ENCODE measurements at regions of chr4 and their contacts with region 1.

Region 1: GRCh38 chr4:986879-987623 is at the start of gene IDUA:
- DNase-seq: peak; percentile 61
- ATAC-seq: peak; percentile 82
- H3K4me3 ChIP-seq: peak within 1 kb of the TSS; percentile 67 to 71
- H3K27ac ChIP-seq: peak within 1 kb of the TSS; percentile 88
- H3K4me1 ChIP-seq: peaks cover 10 to 39% of the 10 kb centered on the region in 2 experiments
- H3K27me3 ChIP-seq: no peaks in the 10 kb centered on the region
- CTCF ChIP-seq: peak in 2 of 3 experiments; percentile 49 to 67; a peak in 4 of 6 replicates
- POLR2A ChIP-seq: peak; percentile 54
- RAD21 ChIP-seq: no peak
- total RNA-seq, gene IDUA: 28.2 TPM

Region 2: DNA sequence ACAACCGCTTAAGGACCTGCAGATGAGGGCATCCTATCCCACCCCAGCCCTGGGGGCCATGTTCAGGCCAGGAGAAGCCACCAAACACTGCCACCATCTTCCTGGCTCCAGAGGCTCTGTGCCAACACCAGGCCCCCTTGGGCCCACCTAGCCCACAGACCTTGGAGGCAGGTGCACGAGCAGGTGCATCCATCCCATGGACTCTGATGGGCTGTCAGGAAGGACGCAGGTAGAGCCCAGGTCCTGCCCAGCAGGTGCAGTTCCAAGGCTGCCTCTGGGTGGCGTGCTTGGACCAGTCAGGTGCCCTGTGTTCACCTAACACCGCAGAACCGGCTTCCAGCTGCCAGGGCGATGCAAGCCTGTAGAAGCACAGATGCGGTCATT is 384.5 kb before region 1 on chr4:
- CTCF ChIA-PET with region 1: interaction called, 3 read pairs
- POLR2A ChIA-PET with region 1: no interaction called
- RAD21 ChIA-PET with region 1: no interaction called
- intact Hi-C with region 1: loop called (anchors 10 kb)
- DNase-seq: peak; percentile 60
- ATAC-seq: peak; percentile 99
- H3K4me3 ChIP-seq: no peak overlapping the region
- H3K27ac ChIP-seq: no peak overlapping the region
- H3K4me1 ChIP-seq: peaks cover 3 to 4% of the 10 kb centered on the region in 2 experiments; a peak in 2 of 4 replicates
- H3K27me3 ChIP-seq: no peaks in the 10 kb centered on the region
- CTCF ChIP-seq: peak; percentile 65 to 90 (median 89)
- POLR2A ChIP-seq: no peak
- RAD21 ChIP-seq: peak; percentile 96

Region 3: DNA sequence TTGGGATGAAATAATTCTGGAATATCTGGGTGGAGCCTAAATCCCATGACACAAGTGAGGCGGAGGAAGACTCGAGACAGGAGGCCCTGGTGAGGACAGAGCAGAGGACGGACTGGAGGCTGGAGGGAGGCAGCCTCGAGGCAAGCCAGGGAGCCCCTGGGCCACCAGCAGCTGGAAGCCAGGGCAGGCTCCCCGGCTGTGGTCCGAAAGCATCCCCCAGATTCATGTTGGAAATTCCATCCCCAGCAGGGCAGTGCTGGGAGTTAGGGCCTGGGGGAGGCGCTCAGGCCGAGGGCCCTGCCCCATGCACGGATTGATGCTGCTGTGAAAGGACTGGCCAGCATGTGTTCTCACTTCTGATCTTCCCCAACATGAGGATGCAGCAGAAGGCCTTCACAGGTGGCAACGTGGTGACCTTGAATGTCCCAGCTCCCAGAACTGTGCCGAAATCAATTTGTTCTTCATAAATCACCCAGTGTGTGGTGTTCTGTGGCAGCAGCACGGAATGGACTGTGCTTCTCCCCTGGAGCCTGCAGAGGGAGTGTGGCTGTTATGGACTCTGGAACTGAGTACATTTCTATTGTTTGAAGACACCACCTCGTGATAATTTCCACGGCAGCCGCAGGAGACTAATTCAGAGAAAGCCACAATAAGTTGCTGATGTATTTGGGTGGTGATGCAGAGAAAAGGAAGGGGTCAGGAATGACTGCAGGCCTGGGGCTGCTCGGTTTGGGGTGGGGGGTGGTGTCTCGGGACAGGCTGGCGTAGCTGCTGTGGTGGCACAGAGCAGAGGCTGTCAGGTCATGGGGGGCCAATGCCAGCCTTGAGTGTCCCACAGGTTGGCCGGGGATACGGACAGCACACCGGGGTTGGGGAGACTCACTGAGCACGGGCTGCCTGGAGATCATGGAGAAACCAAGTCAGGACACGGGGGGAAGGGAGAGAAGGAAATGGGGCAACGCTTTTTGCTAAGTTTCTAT is 224.6 kb before region 1 on chr4:
- CTCF ChIA-PET with region 1: no interaction called
- POLR2A ChIA-PET with region 1: no interaction called
- RAD21 ChIA-PET with region 1: no interaction called
- intact Hi-C with region 1: loop called (anchors 10 kb)
- DNase-seq: no peak
- ATAC-seq: peak; percentile 51
- H3K4me3 ChIP-seq: no peak overlapping the region
- H3K27ac ChIP-seq: peak overlapping the region; percentile 26; the same call in 1 of the 2 replicates
- H3K4me1 ChIP-seq: no peaks in the 10 kb centered on the region; a peak in 1 of 4 replicates
- H3K27me3 ChIP-seq: no peaks in the 10 kb centered on the region
- CTCF ChIP-seq: peak in 2 of 3 experiments; percentile 26 to 38; a peak in 1 of 6 replicates
- POLR2A ChIP-seq: no peak
- RAD21 ChIP-seq: no peak

Region 4: DNA sequence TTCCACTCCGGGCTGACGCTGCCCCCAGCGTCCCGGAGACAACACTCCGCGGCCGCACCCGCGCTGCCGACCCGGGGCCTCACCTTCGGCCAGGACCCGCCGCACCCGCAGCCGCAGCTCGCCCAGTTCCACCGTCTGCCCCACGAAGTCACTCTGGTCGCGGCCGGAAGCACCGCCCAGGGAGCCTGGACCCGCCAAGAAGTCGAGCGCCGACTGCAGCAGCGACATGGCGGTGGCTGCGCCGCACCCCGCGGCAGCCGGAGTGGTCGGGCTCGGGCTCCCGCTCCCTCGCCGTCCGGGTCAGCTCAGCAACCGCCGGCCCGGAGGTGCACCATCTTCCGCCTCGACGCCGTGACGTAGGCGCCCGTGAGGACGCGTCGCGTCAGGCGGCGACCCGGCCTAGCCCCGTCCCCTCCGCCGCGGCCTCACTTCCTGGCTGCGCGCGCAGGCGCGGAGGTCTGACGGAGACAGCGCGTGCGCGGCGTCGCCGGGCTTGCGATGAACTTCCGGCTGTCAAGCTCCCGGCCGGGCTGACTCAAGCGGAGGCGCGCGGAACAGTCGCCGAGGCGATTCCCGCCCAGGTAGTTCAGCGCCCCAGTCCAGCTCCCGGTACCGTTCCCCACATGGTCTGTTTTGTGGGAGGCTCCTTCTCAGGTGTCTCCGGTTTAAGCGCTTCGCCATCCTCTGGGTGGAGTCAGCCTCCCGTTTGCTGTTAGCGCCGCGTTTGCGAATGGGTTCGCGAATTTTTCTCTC is 54.9 kb before region 1 on chr4 and contains the starts of genes GAK and TMEM175:
- CTCF ChIA-PET with region 1: interaction called, 7 read pairs
- POLR2A ChIA-PET with region 1: interaction called, 4 read pairs
- RAD21 ChIA-PET with region 1: no interaction called
- intact Hi-C with region 1: loop called (anchors 1 kb)
- DNase-seq: peak; percentile 91
- ATAC-seq: peak; percentile 98
- H3K4me3 ChIP-seq: peak within 1 kb of the TSS; percentile 91 to 98
- H3K27ac ChIP-seq: peak within 1 kb of the TSS; percentile 84
- H3K4me1 ChIP-seq: peaks cover 6 to 14% of the 10 kb centered on the region in 2 experiments; a peak in 3 of 4 replicates
- H3K27me3 ChIP-seq: no peaks in the 10 kb centered on the region
- CTCF ChIP-seq: no peak
- POLR2A ChIP-seq: peak; percentile 74
- RAD21 ChIP-seq: no peak
- total RNA-seq, gene GAK: 123 TPM
- total RNA-seq, gene TMEM175: 17.5 TPM

Region 5: DNA sequence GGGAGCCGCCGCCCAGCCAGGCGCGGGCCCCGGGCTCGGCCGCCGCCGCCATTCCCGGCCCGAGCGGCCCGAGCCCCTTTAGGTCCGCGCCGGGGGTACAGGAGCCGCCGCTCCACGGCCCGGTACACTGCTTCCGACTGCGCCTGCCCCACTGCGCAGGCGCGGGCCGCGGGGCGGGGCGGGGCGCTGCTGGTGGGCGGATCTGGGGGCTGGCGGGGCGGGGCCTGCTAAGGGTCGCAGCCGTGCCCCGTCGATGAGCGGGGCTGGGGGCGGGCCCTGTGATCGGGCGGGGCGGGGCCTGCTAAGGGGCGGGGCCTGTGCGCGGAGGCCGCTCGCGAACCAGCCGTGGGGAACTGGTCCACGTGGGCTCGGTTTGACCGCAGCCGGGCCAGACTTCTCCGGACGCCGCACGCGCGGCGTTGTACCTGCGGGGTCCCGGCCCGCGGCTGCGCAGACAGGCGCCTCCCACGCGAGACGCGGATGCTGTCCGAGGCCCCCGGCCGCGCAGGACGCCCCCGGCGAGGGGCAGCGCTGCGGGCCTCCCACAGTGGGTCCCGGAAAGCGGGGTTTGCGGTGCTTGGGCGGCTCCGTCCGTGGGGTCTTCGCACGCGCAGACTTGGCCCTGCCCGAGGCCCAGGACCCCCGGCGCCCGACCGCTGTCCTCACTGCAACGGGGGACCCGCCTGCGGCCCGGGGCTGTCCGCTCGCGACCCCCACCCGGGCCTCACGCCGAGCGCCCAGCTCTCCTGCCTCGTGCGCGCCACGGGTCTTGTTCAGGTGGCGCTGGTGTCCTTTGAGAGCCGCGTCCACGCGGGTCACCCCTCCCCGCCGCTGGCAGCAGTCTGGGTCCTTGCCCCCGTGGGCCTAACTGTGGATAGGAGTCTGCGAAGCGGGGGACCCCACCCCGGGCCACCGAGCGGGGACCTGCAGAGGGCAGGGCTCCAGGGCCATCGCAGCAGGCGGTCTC is 13.3 kb before region 1 on chr4 and contains the start of gene DGKQ:
- CTCF ChIA-PET with region 1: no interaction called
- POLR2A ChIA-PET with region 1: no interaction called
- RAD21 ChIA-PET with region 1: no interaction called
- intact Hi-C with region 1: loop called (anchors 2 kb)
- DNase-seq: no peak
- ATAC-seq: peak; percentile 86
- H3K4me3 ChIP-seq: peak within 1 kb of the TSS; percentile 68 to 80
- H3K27ac ChIP-seq: peak within 1 kb of the TSS; percentile 58; the same call in 1 of the 2 replicates
- H3K4me1 ChIP-seq: peaks cover 9 to 19% of the 10 kb centered on the region in 2 experiments; a peak in 3 of 4 replicates
- H3K27me3 ChIP-seq: no peaks in the 10 kb centered on the region
- CTCF ChIP-seq: no peak
- POLR2A ChIP-seq: no peak
- RAD21 ChIP-seq: no peak
- total RNA-seq, gene DGKQ: 22.0 TPM

Measured in HCT116 (cell line).